ENCODE measurements at regions of chr11 and their contacts with region 1.

Region 1: DNA sequence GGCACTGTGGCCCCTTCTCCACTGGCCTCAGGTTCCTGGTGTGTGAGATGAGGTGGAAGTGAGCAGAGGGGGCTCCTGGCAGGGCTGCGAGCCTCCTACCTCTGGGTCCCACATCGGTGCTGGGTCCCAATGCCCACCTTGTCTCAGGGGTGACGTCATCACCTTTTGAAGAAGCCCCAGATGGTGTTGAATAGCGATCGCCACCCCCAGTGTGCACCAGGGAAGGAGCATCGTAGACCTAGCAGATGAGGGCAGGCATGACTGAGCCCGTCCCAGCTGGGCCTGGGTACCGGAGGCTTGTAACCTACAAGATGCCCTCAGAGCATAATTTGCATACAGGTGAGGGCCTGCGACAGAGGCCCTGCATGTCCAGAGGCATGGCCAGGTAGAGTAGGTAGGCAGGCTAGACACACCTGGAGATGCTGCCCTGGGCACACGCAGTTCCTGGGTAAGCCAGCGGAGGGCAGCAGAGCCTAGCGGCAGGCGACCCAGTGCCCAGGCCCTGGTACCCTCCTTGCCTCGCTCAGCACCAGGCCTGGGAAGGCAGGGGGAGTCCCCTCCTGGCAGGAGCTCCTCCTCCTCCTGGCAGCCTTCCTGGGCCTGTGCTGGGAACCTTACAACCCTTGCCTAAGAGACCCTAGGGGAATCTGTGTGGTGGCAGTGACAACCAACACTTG is 52.5 kb downstream of the TPCN2 start:
- DNase-seq: peak; percentile 60
- H3K4me3 ChIP-seq: no peak overlapping the region
- H3K27ac ChIP-seq: no peak overlapping the region
- H3K4me1 ChIP-seq: no peaks in the 10 kb centered on the region
- CTCF ChIP-seq: peak; percentile 90

Region 2: GRCh38 chr11:69382131-69383128 is 281.2 kb after region 1 on chr11:
- CTCF ChIA-PET with region 1: no interaction called
- POLR2A ChIA-PET with region 1: no interaction called
- intact Hi-C with region 1: no loop called
- DNase-seq: peak; percentile 82
- H3K4me3 ChIP-seq: peak overlapping the region; percentile 50
- H3K27ac ChIP-seq: no peak overlapping the region
- H3K4me1 ChIP-seq: peaks cover 12% of the 10 kb centered on the region
- CTCF ChIP-seq: no peak

Region 3: DNA sequence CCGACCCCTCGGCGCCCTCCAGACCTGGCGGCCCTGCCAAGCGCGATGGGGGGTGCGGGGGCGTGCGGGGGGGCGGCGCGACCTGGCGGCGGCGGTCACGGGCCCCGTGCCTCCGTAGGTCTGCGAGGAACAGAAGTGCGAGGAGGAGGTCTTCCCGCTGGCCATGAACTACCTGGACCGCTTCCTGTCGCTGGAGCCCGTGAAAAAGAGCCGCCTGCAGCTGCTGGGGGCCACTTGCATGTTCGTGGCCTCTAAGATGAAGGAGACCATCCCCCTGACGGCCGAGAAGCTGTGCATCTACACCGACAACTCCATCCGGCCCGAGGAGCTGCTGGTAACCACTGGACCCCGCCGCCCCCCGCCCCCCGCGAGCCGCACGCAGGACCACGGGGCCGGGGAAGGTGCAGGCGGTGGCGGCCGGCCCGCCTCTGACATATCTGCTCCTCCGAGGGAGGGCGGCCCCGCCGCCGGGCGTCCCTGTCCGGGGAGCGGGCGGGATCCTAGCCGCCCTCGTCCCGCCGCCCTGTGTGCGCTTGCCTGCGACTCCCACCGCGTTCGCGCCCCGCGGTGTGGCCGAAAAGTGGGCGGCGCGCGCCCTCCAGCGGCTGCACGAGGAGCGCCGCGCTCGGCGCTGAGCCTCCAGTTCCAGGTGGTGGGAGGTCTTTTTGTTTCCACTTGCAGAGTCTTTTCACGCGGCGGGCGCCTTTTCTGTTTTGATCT is 541.8 kb after region 1 on chr11:
- CTCF ChIA-PET with region 1: no interaction called
- POLR2A ChIA-PET with region 1: interaction called, 3 read pairs
- intact Hi-C with region 1: loop called (anchors 1 kb)
- DNase-seq: peak; percentile 81
- H3K4me3 ChIP-seq: peak overlapping the region; percentile 69
- H3K27ac ChIP-seq: no peak overlapping the region
- H3K4me1 ChIP-seq: no peaks in the 10 kb centered on the region
- CTCF ChIP-seq: peak; percentile 85

Region 4: GRCh38 chr11:69670158-69670845 is 569.0 kb after region 1 on chr11:
- CTCF ChIA-PET with region 1: no interaction called
- POLR2A ChIA-PET with region 1: no interaction called
- intact Hi-C with region 1: loop called (anchors 1 kb)
- DNase-seq: peak; percentile 77
- H3K4me3 ChIP-seq: no peak overlapping the region
- H3K27ac ChIP-seq: no peak overlapping the region
- H3K4me1 ChIP-seq: peaks cover 14% of the 10 kb centered on the region
- CTCF ChIP-seq: peak; percentile 96